ENCODE measurements at regions of chr11 and their contacts with region 1.

Region 1: DNA sequence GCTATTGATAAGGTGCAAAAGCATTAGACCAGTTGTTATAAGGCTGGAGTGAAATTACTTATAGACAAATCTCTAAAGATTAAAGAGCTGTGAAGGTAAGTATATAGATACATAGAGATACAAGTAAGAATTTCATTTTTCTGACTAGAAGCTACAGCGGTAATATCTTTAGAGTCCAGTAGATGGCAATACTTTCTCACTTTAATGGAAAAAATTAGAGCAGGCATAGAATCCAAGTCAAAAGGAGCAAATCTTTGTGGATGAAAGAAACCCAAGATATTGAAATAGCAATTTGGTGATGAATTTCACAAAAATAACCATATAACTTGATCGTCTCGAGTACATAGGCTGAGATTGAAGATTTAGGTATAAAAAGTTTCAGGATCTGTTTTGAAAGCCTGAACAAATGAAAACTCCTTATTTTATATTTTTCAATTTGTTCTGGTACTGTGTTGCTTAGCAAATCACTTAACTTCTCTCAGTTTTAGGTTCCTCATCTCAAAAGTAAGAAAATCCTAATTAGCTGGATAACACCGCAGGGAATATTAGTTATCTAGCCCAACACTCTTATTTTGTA is 81.9 kb downstream of the UVRAG start:
- DNase-seq: no peak
- ATAC-seq: no peak
- H3K4me3 Mint-ChIP-seq: no peak overlapping the region
- H3K27ac Mint-ChIP-seq: no peak overlapping the region
- H3K4me1 Mint-ChIP-seq: peaks cover 27% of the 10 kb centered on the region
- H3K27me3 Mint-ChIP-seq: no peaks in the 10 kb centered on the region

Region 2: GRCh38 chr11:75907906-75908527 is 11.1 kb after region 1 on chr11:
- CTCF ChIA-PET with region 1: no interaction called
- POLR2A ChIA-PET with region 1: no interaction called
- intact Hi-C with region 1: loop called in 1 of 2 experiments (anchors 1 kb)
- DNase-seq: no peak
- ATAC-seq: no peak
- H3K4me3 Mint-ChIP-seq: no peak overlapping the region
- H3K27ac Mint-ChIP-seq: no peak overlapping the region
- H3K4me1 Mint-ChIP-seq: peaks cover 27% of the 10 kb centered on the region
- H3K27me3 Mint-ChIP-seq: no peaks in the 10 kb centered on the region

Region 3: DNA sequence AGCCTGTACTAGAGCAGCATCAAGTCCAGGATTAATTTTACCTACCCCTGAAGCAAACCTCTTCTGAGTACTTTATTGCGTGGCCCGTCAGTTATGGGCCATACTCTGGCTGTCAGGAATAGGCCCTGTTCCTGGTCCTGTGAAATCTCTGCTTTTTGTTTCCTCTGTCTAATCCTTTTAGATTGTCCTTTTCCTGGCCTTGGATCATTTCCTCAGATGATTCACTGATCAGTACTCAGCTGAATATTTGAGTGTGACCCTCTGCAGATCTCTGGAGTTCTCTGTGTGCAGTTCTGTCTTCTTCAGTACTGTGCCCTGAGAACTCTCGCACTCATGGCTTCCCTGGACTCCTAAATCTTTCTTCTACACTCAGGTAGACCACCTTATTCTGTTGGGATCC is 41.6 kb after region 1 on chr11:
- CTCF ChIA-PET with region 1: no interaction called
- POLR2A ChIA-PET with region 1: no interaction called
- intact Hi-C with region 1: no loop called
- DNase-seq: no peak
- ATAC-seq: no peak
- H3K4me3 Mint-ChIP-seq: no peak overlapping the region
- H3K27ac Mint-ChIP-seq: no peak overlapping the region
- H3K4me1 Mint-ChIP-seq: peaks cover 3% of the 10 kb centered on the region
- H3K27me3 Mint-ChIP-seq: no peaks in the 10 kb centered on the region

Region 4: DNA sequence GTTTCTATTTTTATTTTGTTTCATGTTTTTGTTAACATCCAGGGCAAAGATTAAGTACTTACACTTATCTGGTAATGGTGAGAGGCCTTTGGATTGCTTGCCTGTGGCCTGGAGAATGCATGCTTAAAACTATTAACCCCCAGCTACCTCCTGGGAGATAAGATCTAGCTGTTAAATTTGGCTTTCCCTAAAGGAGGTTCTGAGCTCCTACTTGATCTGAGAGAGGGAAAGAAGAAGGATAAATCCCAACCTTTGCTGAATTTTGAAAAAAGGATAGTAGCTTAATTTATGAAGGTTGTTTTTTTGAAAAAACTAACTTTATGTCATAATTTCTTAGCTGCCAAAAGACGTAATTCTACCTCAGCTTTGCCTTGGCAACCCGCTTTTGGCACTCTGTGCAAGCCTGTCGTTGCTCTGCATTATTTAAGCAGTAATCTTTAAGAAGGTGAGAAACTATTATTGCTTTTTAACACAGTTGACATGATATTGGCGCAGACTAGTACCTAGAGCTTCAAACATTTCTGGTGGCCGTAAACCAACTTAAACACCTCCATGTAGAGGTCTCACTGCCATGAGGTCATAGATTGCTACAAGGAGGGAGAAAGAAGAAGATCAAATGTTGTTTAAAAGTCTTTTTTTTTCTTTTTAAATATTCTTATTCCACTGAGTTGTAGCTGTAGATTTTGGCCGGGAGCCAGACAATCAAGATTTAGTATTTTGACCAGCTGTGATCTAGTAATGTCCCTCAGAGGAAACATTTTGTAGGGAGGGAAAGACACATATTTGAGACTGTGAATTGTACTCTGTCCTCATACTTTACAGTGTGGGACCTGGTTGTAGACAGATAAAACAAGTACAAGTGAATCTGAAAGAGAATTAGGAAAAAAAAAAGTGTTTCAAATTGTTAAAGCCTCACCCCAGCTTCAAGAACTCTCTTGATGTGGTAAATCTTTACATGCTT is 235.0 kb after region 1 on chr11:
- CTCF ChIA-PET with region 1: interaction called, 3 read pairs
- POLR2A ChIA-PET with region 1: no interaction called
- intact Hi-C with region 1: loop called in 1 of 2 experiments (anchors 5 kb)
- DNase-seq: no peak
- ATAC-seq: peak; percentile 78
- H3K4me3 Mint-ChIP-seq: no peak overlapping the region
- H3K27ac Mint-ChIP-seq: no peak overlapping the region
- H3K4me1 Mint-ChIP-seq: peaks cover 31% of the 10 kb centered on the region
- H3K27me3 Mint-ChIP-seq: no peaks in the 10 kb centered on the region

Region 5: DNA sequence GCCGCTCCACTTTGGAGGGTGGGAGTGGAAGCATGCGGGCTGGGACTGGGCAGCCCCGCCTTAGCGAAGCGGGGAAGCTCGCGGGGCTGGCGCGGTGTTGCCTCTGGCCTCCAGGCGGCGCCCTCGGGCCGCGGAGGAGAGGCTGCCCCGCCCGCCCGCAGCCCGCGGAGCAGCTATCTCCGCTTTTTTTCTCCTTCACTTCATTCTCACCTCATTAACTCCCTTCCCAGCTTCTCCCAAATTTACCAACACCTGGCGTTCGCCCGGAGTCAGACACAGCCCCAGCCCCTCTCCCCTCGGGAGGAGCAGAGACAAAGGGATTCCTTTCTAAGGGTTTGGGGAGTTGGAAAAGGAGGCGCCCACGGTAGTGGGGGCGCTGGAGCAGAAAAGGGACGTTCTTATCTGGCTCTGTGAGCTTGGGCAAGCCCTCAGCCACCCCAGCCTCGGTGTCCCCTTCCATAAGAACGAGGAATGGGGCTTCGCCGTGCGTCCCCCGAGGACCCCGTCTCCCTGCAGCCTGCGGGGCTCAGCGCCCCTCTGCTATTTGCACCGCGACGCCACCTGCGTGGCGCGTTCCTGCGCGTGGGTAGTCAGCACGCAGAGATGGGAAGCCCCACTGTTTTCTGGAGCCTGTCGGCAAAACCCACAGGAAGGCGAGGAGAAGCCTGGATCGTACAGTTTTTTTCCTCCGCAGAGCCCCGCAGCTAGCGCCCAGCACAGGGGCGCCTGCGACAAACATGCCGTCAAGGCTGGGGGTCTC is 310.9 kb after region 1 on chr11:
- CTCF ChIA-PET with region 1: interaction called, 14 read pairs
- POLR2A ChIA-PET with region 1: no interaction called
- intact Hi-C with region 1: loop called in 1 of 2 experiments (anchors 2 kb)
- DNase-seq: peak; percentile 87
- ATAC-seq: peak; percentile 76
- H3K4me3 Mint-ChIP-seq: peak overlapping the region; percentile 60
- H3K27ac Mint-ChIP-seq: no peak overlapping the region
- H3K4me1 Mint-ChIP-seq: peaks cover 15% of the 10 kb centered on the region
- H3K27me3 Mint-ChIP-seq: peaks cover 55% of the 10 kb centered on the region

Region 6: DNA sequence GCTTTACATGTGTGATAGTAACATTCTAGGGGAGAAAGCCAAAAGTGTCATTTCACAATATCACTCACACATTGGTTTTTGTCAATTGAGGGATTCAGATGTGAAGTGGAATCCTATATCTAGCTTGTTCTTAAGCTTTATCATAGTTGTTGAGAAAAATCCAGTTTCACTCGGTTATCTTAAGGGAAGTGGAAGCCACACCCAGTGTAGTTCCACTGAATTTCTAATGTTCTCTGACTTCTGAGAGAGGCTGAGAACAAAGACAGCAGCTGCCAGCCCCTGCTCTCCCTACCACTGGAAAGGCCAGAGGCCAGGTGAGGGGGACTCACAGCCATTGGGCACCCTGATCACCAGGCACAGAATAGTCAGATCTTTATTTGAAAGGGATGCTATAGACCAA is 430.3 kb after region 1 on chr11:
- CTCF ChIA-PET with region 1: no interaction called
- POLR2A ChIA-PET with region 1: no interaction called
- intact Hi-C with region 1: no loop called
- DNase-seq: no peak
- ATAC-seq: no peak
- H3K4me3 Mint-ChIP-seq: no peak overlapping the region
- H3K27ac Mint-ChIP-seq: no peak overlapping the region
- H3K4me1 Mint-ChIP-seq: peaks cover 9% of the 10 kb centered on the region
- H3K27me3 Mint-ChIP-seq: peaks cover 9% of the 10 kb centered on the region